OCI-LY7 (cell line): ENCODE measurements at regions of chr4 and their contacts with region 1.

Region 1: GRCh38 chr4:84971319-84971932 is 4.9 kb upstream of the WDFY3 start:
- DNase-seq: peak; percentile 23
- H3K4me3 ChIP-seq: no peak overlapping the region
- H3K27ac ChIP-seq: no peak overlapping the region
- H3K4me1 ChIP-seq: no peaks in the 10 kb centered on the region
- CTCF ChIP-seq: peak; percentile 78

Region 2: DNA sequence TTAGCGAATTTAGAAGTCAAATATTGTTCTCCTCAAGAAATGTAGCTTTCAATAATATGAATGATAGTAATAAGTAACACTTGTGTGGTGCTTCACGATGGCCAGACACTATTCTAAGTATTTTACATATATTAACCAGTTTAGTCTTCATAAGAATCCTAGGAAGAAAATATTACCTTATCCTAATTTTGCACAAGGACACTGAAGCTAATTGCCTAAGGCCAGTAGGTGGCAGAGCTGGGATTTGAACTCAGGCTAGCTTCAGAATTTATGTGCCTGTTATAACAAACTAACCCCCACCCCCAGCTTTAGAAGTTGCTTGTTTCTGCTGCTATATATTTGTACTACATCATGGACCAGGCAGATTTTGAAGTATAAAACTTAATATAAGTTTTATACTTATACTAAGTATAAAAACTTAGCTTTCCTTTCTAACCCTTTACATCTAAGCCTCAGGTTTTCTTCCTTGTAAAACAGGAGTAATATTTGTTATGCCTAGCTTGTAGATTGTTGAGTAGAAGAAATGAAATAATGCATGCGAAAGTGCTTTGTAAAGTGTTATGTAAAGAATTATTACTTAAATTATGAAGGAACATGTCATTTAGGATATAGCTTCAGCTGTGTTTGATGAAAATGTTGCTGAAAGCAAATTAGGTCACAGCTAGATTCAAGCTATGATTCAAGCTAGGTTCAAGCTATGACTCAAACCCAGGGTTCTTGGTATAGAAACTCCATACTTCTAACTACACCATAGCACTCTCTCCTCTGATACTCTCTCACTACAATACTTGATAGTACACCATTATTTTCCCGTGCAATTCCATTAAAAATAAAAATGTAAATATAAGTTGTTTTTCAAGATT is 392.7 kb before region 1 on chr4:
- CTCF ChIA-PET with region 1: no interaction called
- POLR2A ChIA-PET with region 1: no interaction called
- intact Hi-C with region 1: loop called (anchors 10 kb)
- DNase-seq: peak; percentile 7
- H3K4me3 ChIP-seq: no peak overlapping the region
- H3K27ac ChIP-seq: no peak overlapping the region
- H3K4me1 ChIP-seq: no peaks in the 10 kb centered on the region
- CTCF ChIP-seq: peak; percentile 73

Region 3: GRCh38 chr4:84750253-84750959 is 221.0 kb before region 1 on chr4:
- CTCF ChIA-PET with region 1: no interaction called
- POLR2A ChIA-PET with region 1: no interaction called
- intact Hi-C with region 1: loop called (anchors 5 kb)
- DNase-seq: peak; percentile 37
- H3K4me3 ChIP-seq: no peak overlapping the region
- H3K27ac ChIP-seq: no peak overlapping the region
- H3K4me1 ChIP-seq: no peaks in the 10 kb centered on the region
- CTCF ChIP-seq: peak; percentile 88